ENCODE measurements at regions of chr9 and their contacts with region 1.

Region 1: GRCh38 chr9:91361291-91362050 is at the start of gene AUH:
- DNase-seq: peak; percentile 89
- H3K4me3 ChIP-seq: peak within 1 kb of the TSS; percentile 80
- H3K27ac ChIP-seq: peak within 1 kb of the TSS; percentile 22
- H3K4me1 ChIP-seq: peaks cover 25% of the 10 kb centered on the region
- CTCF ChIP-seq: no peak
- total RNA-seq, gene AUH: 24.5 and 31.7 TPM in 2 replicates

Region 2: DNA sequence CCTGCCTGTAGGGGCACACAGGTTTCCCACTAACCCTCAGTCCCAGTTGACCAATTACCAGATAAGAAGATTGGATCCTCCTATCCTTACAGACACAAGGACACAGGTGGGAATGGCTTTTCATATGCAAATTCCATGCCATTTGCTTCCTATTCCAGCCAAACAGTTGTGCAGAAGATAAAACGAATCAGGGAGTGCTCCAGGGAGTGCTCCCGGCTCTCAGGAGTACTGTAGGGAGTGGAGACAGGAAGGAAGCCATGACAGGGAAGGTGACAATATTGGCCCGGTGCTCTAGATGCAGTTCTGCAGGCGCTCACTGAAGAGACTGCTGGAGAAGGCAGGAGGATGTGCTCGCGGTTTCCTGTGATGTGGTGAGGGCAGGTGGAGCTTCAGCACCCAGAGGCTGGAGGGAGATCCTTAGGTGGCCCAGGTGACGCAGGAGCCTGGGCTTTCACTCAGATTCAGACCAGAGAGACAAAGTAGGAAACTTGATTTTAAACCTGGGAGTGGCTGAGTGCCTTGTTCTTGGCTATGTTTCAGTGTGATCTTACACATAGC is 259.8 kb before region 1 on chr9:
- CTCF ChIA-PET with region 1: no interaction called
- POLR2A ChIA-PET with region 1: interaction called, 3 read pairs
- intact Hi-C with region 1: loop called (anchors 10 kb)
- DNase-seq: peak; percentile 82
- H3K4me3 ChIP-seq: peak overlapping the region; percentile 2
- H3K27ac ChIP-seq: no peak overlapping the region
- H3K4me1 ChIP-seq: peaks cover 32% of the 10 kb centered on the region
- CTCF ChIP-seq: no peak

Region 3: DNA sequence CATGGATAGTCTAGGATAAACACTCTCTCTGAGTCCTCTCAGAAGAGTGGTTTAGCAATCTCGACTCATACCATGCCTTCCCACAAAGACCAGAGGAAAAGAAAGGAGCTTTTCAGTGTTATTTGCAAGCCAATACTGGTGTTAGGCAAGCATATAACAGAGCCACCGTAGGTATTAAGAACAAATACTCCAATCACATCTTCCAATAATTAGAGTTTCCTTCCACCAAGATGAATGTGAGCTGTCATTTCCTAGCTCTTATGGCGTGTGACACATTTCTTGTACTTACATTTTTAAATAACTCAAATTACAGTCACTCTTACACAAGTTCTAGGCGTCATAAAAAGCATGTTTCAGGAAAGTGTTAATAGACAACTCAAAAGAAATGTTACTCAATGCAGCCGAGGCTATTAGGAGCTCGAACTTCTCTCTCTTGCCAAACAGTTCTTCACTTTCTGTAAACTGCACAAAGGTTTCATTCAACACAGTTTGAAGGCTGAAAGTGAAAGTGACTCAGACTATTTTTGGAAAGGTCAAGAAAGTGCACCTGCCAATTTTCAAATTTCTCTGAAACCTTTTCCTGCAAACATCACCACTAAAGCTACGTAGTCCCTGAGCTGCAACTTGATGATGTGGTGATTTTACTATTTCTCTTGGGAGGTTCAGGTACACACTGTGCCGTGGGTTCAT is 153.6 kb before region 1 on chr9:
- CTCF ChIA-PET with region 1: no interaction called
- POLR2A ChIA-PET with region 1: interaction called, 4 read pairs
- intact Hi-C with region 1: loop called (anchors 5 kb)
- DNase-seq: peak; percentile 94
- H3K4me3 ChIP-seq: peak overlapping the region; percentile 51
- H3K27ac ChIP-seq: peak overlapping the region; percentile 95
- H3K4me1 ChIP-seq: peaks cover 46% of the 10 kb centered on the region
- CTCF ChIP-seq: no peak

Measured in OCI-LY7 (cell line).